HEK293 (cell line): ENCODE measurements at regions of chr10 and their contacts with region 1.

Region 1: GRCh38 chr10:48656241-48656913 is 28.3 kb upstream of the WDFY4 start:
- H3K4me3 ChIP-seq: peak overlapping the region; percentile 50
- H3K27ac ChIP-seq: no peak overlapping the region; the same call in 1 of the 2 replicates
- H3K4me1 ChIP-seq: no peaks in the 10 kb centered on the region
- CTCF ChIP-seq: peak; percentile 68

Region 2: GRCh38 chr10:48390933-48391845 is 265.2 kb before region 1 on chr10:
- CTCF ChIA-PET with region 1: interaction called, 14 read pairs
- POLR2A ChIA-PET with region 1: no interaction called
- H3K4me3 ChIP-seq: no peak overlapping the region
- H3K27ac ChIP-seq: no peak overlapping the region
- H3K4me1 ChIP-seq: no peaks in the 10 kb centered on the region
- CTCF ChIP-seq: no peak

Region 3: DNA sequence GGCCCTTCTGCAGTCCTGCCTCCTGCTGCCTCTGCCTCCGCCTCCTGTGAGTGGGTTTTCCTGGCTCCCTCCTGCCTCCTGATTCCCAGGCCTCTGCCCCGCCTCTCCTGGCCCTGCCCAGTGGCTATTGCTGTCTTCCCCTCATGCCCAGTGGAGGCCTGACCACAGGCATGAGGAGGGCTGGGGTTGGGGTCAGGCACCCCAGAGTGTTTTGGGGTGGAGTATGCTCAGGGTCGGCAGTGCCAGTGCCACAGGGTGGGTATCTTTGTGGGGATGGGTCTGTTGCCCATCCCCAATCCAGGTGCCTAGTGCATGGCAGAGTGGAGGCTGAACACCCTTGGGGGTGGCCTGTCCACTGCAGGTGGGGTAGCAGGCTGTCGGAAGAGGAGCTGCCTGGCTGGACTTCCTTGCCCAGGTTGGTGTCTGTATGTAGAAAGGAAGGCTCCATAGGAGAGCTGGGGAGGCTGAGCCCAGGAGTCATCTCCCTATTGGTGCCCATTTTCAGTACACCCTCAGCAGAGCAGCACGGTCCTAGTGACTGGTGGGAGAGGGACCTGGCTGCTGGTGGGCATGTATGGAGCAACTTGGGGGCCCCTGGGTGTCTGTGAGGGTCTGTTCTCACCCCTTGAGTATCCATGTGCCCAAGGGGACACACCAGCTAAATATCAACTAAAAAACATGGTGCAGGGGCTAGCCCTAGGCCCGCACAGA is 113.8 kb before region 1 on chr10:
- CTCF ChIA-PET with region 1: interaction called, 139 read pairs
- POLR2A ChIA-PET with region 1: no interaction called
- H3K4me3 ChIP-seq: no peak overlapping the region
- H3K27ac ChIP-seq: no peak overlapping the region
- H3K4me1 ChIP-seq: no peaks in the 10 kb centered on the region
- CTCF ChIP-seq: no peak

Region 4: GRCh38 chr10:48614481-48615390 is 41.6 kb before region 1 on chr10:
- CTCF ChIA-PET with region 1: interaction called, 18 read pairs
- POLR2A ChIA-PET with region 1: no interaction called
- H3K4me3 ChIP-seq: no peak overlapping the region
- H3K27ac ChIP-seq: no peak overlapping the region
- H3K4me1 ChIP-seq: no peaks in the 10 kb centered on the region
- CTCF ChIP-seq: no peak

Region 5: GRCh38 chr10:48907730-48908129 is 251.4 kb after region 1 on chr10:
- CTCF ChIA-PET with region 1: interaction called, 10 read pairs
- POLR2A ChIA-PET with region 1: no interaction called
- H3K4me3 ChIP-seq: no peak overlapping the region
- H3K27ac ChIP-seq: no peak overlapping the region
- H3K4me1 ChIP-seq: no peaks in the 10 kb centered on the region
- CTCF ChIP-seq: no peak

Region 6: GRCh38 chr10:49518982-49519578 is 862.7 kb after region 1 on chr10:
- CTCF ChIA-PET with region 1: interaction called, 21 read pairs
- POLR2A ChIA-PET with region 1: no interaction called
- H3K4me3 ChIP-seq: no peak overlapping the region
- H3K27ac ChIP-seq: no peak overlapping the region
- H3K4me1 ChIP-seq: no peaks in the 10 kb centered on the region
- CTCF ChIP-seq: no peak